Activated B cell treated with CpG ODN at 0.5 μM for 24 hours (primary cell): ENCODE measurements at regions of chr10 and their contacts with region 1.

Region 1: DNA sequence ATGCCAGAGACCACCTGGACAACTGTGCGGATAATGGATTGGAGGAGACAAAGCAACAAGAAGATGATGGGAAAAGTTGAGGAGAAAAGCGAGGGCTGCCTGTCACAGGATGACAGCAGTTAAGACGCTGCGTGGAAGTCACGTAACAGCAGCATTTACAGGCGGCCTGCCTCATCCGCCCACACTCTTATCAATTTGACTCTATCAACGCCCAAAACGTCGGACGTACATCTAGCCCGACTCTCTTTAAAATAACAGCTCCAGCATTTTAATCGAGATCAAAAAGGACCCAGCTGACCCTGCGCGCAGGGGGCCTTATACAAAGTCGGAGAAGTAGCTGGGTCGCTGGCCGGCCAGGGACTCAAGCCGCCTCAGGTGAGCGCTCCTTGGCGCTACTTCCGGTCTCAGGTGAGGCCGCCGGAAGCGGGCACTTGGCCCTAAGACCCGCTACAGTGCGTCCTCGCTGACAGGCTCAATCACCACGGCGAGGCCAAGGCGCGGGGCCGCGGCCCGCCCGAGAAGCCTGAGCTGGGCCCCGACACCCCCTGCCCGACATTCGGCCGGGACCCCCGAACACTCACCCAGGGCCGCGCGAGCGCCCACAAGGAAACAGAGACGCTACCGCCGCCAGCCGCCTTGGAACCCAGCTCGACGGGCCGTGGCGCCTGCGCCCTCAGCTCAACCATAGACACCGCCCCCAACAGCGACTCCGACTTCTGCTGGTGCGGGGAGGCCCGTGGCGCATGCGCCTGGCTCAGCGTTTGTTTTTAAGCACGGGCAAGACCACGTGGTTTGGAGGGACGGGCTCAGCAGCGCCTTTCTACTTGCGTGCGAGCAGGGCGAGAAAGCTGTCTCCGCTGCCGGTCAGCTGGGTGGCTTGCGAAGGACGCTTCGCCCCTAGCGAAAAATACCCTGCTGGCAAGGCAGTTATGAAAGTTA is at the start of gene ERCC6:
- DNase-seq: peak; percentile 92
- ATAC-seq: peak; percentile 82
- H3K4me3 Mint-ChIP-seq: peak within 1 kb of the TSS; percentile 93
- H3K27ac Mint-ChIP-seq: peak within 1 kb of the TSS; percentile 91
- H3K4me1 Mint-ChIP-seq: peaks cover 51% of the 10 kb centered on the region
- H3K27me3 Mint-ChIP-seq: peaks cover 17% of the 10 kb centered on the region
- CTCF ChIP-seq: no peak
- total RNA-seq, gene ERCC6: 37.4 and 46.2 TPM in 2 replicates

Region 2: GRCh38 chr10:48306265-48306869 is 1232.3 kb before region 1 on chr10 and contains the start of gene MAPK8:
- CTCF ChIA-PET with region 1: no interaction called
- POLR2A ChIA-PET with region 1: no interaction called
- intact Hi-C with region 1: loop called (anchors 1 kb)
- DNase-seq: peak; percentile 93
- ATAC-seq: peak; percentile 92
- H3K4me3 Mint-ChIP-seq: peak within 1 kb of the TSS; percentile 78
- H3K27ac Mint-ChIP-seq: peak within 1 kb of the TSS; percentile 47
- H3K4me1 Mint-ChIP-seq: peaks cover 33% of the 10 kb centered on the region
- H3K27me3 Mint-ChIP-seq: no peaks in the 10 kb centered on the region
- CTCF ChIP-seq: no peak
- total RNA-seq, gene MAPK8: 25.8 and 25.9 TPM in 2 replicates

Region 3: DNA sequence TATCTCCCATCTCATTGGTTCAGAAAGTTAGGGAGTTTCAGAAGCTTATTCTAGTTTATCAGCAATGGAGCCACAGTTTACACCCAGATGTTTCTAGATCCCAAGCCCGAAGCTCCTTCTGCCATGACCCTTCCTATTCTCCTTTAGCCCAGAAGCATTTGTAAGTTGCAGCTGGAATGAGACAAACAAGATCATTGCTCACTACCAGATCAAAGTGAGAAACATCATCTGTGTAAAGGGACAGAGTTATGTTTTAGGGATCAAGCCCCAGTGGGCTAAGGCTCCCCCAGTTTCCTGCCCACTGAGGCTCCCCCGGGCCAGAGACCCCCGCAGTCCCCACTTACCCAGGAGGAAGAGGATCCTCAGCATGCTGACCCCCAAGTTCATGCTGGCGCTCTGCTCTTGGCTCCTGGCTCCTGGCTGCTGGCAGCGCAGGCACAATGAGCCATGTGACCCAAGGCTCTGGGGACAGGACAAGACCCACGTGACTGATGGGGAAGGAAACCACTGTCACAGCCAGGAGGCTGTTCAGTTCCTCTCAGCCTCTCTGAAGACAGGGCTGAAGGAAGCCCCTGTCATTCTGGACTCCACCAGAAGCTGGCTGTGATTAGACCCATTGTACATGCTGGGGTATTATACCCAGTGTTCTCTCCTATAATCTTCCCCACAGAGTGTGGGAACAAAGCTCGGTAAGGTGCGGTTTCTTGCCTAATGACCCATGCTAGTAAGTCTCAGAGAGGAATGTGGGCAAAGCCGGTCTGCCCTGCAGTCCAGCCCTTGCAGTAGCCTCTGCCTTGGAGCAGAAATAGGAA is 350.5 kb before region 1 on chr10 and contains the start of gene TMEM273:
- CTCF ChIA-PET with region 1: no interaction called
- POLR2A ChIA-PET with region 1: interaction called, 4 read pairs
- intact Hi-C with region 1: loop called (anchors 5 kb)
- DNase-seq: no peak
- ATAC-seq: peak; percentile 75
- H3K4me3 Mint-ChIP-seq: peak within 1 kb of the TSS; percentile 82
- H3K27ac Mint-ChIP-seq: peak within 1 kb of the TSS; percentile 93
- H3K4me1 Mint-ChIP-seq: peaks cover 81% of the 10 kb centered on the region
- H3K27me3 Mint-ChIP-seq: no peaks in the 10 kb centered on the region
- CTCF ChIP-seq: no peak
- total RNA-seq, gene TMEM273: 6.7 and 8.5 TPM in 2 replicates

Region 4: GRCh38 chr10:49568235-49568634 is 29.6 kb after region 1 on chr10:
- CTCF ChIA-PET with region 1: interaction called, 3 read pairs
- POLR2A ChIA-PET with region 1: interaction called, 15 read pairs
- intact Hi-C with region 1: loop called (anchors 1 kb)
- DNase-seq: no peak
- ATAC-seq: peak; percentile 80
- H3K4me3 Mint-ChIP-seq: peak overlapping the region; percentile 0
- H3K27ac Mint-ChIP-seq: peak overlapping the region; percentile 15
- H3K4me1 Mint-ChIP-seq: peaks cover 21% of the 10 kb centered on the region
- H3K27me3 Mint-ChIP-seq: peaks cover 14% of the 10 kb centered on the region
- CTCF ChIP-seq: no peak

Region 5: GRCh38 chr10:49761789-49762565 is 223.3 kb after region 1 on chr10 and contains the start of gene OGDHL:
- CTCF ChIA-PET with region 1: no interaction called
- POLR2A ChIA-PET with region 1: no interaction called
- intact Hi-C with region 1: loop called (anchors 5 kb)
- DNase-seq: no peak
- ATAC-seq: peak; percentile 66
- H3K4me3 Mint-ChIP-seq: peak within 1 kb of the TSS; percentile 49
- H3K27ac Mint-ChIP-seq: no peak within 1 kb of the TSS
- H3K4me1 Mint-ChIP-seq: peaks cover 10% of the 10 kb centered on the region
- H3K27me3 Mint-ChIP-seq: peaks cover 43% of the 10 kb centered on the region
- CTCF ChIP-seq: no peak
- total RNA-seq, gene OGDHL: not detected in 2 replicates